Activated CD4-positive, alpha-beta memory T cell treated with anti-CD3 and anti-CD28 coated beads, Interleukin-2, amount 10 ng/mL, durations not matched to agents 7 days and 5 days (primary cell): ENCODE measurements at regions of chr5 and their contacts with region 1.

Region 1: DNA sequence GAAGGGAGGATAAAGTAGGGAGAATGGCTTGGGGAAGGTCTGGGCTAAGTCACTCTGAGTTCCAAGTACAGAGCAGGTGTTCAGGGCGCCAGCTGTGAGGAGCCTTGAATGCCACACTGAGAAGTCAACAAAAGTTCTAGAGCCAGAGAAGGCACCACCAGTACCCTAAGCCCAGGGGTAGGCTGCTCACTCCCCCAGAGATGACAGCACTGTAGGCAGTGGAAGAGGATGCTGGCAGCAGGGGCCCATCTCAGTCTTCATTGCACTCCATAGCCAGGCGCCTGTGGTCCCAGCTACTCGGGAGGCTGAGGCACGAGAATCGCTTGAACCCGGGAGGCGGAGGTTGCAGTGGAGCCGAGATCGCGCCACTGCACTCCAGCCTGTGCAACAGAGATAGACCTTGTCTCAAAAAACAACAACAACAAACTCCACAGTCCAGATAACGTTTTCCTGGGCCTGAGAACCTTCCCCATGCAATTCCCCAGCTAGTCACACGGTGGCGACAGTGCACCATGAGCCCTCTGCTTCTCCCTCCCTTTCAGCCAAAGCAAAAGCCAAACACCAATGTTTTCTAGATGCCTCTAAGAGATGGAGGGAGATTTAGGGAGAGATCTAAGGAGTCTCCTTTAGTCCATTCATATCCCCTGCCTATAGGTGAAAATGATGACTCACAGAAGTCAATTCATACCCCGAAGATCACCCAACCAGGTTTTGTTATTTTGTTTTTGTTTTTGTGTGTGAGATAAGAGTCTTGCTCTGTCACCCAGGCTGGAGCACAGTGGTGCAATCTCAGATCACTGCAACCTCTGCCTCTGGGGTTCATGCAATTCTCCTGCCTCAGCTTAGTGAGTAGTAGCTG is 19.8 kb upstream of the NSD1 start:
- DNase-seq: peak; percentile 83
- H3K4me3 Mint-ChIP-seq: no peak overlapping the region
- H3K27ac Mint-ChIP-seq: no peak overlapping the region
- H3K4me1 Mint-ChIP-seq: peaks cover 25% of the 10 kb centered on the region
- H3K27me3 Mint-ChIP-seq: no peaks in the 10 kb centered on the region

Region 2: GRCh38 chr5:176793337-176794138 is 320.3 kb before region 1 on chr5:
- CTCF ChIA-PET with region 1: no interaction called
- POLR2A ChIA-PET with region 1: no interaction called
- DNase-seq: no peak
- H3K4me3 Mint-ChIP-seq: no peak overlapping the region
- H3K27ac Mint-ChIP-seq: no peak overlapping the region
- H3K4me1 Mint-ChIP-seq: no peaks in the 10 kb centered on the region
- H3K27me3 Mint-ChIP-seq: peaks cover 33% of the 10 kb centered on the region

Region 3: GRCh38 chr5:177071666-177072385 is 42.0 kb before region 1 on chr5:
- CTCF ChIA-PET with region 1: interaction called, 65 read pairs
- POLR2A ChIA-PET with region 1: no interaction called
- DNase-seq: peak; percentile 66
- H3K4me3 Mint-ChIP-seq: no peak overlapping the region
- H3K27ac Mint-ChIP-seq: no peak overlapping the region
- H3K4me1 Mint-ChIP-seq: peaks cover 3% of the 10 kb centered on the region
- H3K27me3 Mint-ChIP-seq: no peaks in the 10 kb centered on the region

Region 4: DNA sequence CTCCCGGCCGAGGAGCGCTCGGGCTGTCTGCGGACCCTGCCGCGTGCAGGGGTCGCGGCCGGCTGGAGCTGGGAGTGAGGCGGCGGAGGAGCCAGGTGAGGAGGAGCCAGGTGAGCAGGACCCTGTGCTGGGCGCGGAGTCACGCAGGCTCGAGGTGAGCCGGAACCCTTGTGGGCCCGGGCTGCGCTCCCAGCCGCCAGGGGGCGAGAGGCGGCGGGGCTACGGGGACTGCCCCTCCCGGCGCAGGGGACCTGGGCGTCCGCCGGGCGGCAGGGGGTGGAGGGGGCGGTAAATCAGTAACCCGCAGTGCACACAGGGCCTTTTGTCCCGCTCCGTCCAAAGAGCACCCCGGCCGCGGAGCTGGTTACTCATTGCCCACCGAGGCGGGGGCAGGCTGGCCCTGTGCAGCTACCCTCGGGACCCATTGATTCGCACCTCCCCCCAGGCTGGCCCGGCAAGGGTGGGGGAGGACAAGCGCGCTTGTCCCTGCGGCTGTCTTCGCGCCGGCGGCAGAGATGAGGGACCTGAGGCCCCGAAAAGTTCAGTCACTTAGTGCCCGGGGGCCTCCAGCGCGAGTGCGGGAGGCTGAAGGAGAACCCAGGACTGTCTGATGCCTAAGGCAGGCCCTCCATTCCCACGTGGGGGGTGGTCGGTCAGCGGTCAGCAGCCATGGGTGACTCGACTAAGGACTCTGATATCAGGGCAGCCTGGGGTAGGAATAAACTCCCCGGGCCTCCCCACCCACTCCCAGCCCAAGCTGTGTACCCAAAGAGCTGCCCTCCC is 26.7 kb before region 1 on chr5:
- CTCF ChIA-PET with region 1: interaction called, 32 read pairs
- POLR2A ChIA-PET with region 1: no interaction called
- DNase-seq: peak; percentile 59
- H3K4me3 Mint-ChIP-seq: no peak overlapping the region
- H3K27ac Mint-ChIP-seq: no peak overlapping the region
- H3K4me1 Mint-ChIP-seq: peaks cover 12% of the 10 kb centered on the region
- H3K27me3 Mint-ChIP-seq: peaks cover 51% of the 10 kb centered on the region

Region 5: GRCh38 chr5:177124486-177124991 is 10.7 kb after region 1 on chr5:
- CTCF ChIA-PET with region 1: interaction called, 20 read pairs
- POLR2A ChIA-PET with region 1: interaction called, 3 read pairs
- DNase-seq: no peak
- H3K4me3 Mint-ChIP-seq: no peak overlapping the region
- H3K27ac Mint-ChIP-seq: no peak overlapping the region
- H3K4me1 Mint-ChIP-seq: peaks cover 16% of the 10 kb centered on the region
- H3K27me3 Mint-ChIP-seq: peaks cover 4% of the 10 kb centered on the region

Region 6: GRCh38 chr5:177133091-177133852 is 19.5 kb after region 1 on chr5 and contains the start of gene NSD1:
- CTCF ChIA-PET with region 1: interaction called, 20 read pairs
- POLR2A ChIA-PET with region 1: interaction called, 23 read pairs
- DNase-seq: peak; percentile 93
- H3K4me3 Mint-ChIP-seq: peak within 1 kb of the TSS; percentile 89
- H3K27ac Mint-ChIP-seq: peak within 1 kb of the TSS; percentile 82
- H3K4me1 Mint-ChIP-seq: peaks cover 56% of the 10 kb centered on the region
- H3K27me3 Mint-ChIP-seq: no peaks in the 10 kb centered on the region
- total RNA-seq, gene NSD1: 79.9 to 90.5 TPM

Region 7: DNA sequence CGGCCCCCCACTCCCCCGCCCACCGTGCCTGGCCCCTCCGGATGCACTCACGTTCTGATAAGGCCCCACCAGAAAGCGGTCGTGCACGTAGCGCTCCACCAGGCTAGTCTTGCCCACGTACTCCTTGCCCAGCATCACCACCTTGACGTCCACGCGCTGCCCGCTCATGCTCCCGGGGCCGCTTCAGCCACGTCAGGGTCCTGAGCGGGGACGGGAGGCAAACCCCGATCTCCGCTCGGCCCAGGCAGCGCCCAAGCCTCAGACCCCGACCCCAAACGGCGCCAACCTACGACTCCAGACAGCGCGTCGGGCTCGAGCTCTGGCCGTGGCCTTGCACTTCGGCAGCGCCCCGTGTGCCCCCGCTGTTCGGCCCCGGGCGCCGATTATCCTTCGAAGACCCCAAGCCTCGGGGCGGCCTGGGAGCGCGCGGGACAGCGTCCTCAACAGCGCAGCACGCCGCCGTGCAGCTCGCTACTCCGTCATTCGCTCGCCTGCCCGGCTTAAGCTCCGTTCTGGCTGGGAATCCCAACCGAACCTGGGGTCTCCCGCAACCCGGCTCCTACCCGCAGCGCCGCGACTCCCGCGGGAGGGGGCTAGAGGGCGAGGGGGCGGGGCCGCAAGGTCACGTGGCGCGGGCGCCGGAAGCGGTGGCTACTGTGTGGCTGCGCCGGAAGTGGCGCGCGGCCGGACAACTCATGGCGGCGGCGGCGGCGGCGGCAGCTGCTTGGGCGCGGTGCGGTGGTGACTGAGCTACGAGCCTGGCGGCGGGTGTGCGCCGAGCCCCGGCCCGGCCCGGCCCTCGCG is 189.5 kb after region 1 on chr5 and contains the starts of genes PRELID1 and RAB24:
- CTCF ChIA-PET with region 1: interaction called, 27 read pairs
- POLR2A ChIA-PET with region 1: interaction called, 5 read pairs
- DNase-seq: peak; percentile 92
- H3K4me3 Mint-ChIP-seq: peak within 1 kb of the TSS; percentile 89
- H3K27ac Mint-ChIP-seq: peak within 1 kb of the TSS; percentile 92
- H3K4me1 Mint-ChIP-seq: peaks cover 74% of the 10 kb centered on the region
- H3K27me3 Mint-ChIP-seq: no peaks in the 10 kb centered on the region
- total RNA-seq, gene PRELID1: 153 to 156 TPM
- total RNA-seq, gene RAB24: 43.0 to 46.6 TPM